PC-9 (cell line): ENCODE measurements at regions of chr6 and their contacts with region 1.

Region 1: DNA sequence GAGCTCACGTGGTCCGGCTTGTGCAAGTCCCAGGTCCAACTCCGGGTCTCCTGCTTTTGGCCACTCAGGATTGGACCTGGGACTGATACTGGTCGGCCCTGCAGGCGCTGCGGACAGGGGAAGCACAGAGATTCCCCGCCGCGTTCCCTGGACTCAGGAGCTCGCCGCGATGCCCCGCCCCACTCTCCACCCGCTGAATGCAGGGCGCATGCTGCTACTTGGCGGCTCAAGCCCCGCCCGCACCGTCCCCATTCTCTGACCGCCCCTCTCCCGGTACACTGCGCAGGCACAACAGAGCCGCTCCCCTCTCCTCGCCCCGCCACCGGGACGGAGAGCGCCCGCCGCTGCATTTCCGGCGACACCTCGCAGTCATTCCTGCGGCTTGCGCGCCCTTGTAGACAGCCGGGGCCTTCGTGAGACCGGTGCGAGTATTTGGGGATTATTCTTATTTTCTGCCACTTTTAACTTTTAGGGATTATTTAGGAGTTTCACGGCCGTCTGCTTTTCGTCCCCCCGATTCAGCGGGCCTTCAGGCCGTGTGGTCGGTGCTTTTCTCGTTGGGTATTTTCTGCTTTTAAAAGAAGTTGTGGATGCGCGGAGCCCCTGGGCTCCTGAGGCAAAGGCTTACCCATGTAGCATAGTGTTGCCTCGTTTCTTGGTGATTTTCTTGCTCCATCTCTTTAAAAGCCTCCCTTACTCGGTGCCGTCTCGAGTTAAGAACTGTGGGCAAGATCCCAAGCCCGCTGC is at the start of gene TMEM14C:
- DNase-seq: peak; percentile 85 to 99
- H3K4me3 ChIP-seq: peak within 1 kb of the TSS; percentile 96
- H3K27ac ChIP-seq: peak within 1 kb of the TSS; percentile 85
- H3K4me1 ChIP-seq: 0 out of 2 replicates have a peak, but pooled peaks cover 10% of the 10 kb centered on the region
- H3K27me3 ChIP-seq: no peaks in the 10 kb centered on the region
- CTCF ChIP-seq: no peak
- total RNA-seq, gene TMEM14C: 154 and 166 TPM in 2 replicates

Region 2: DNA sequence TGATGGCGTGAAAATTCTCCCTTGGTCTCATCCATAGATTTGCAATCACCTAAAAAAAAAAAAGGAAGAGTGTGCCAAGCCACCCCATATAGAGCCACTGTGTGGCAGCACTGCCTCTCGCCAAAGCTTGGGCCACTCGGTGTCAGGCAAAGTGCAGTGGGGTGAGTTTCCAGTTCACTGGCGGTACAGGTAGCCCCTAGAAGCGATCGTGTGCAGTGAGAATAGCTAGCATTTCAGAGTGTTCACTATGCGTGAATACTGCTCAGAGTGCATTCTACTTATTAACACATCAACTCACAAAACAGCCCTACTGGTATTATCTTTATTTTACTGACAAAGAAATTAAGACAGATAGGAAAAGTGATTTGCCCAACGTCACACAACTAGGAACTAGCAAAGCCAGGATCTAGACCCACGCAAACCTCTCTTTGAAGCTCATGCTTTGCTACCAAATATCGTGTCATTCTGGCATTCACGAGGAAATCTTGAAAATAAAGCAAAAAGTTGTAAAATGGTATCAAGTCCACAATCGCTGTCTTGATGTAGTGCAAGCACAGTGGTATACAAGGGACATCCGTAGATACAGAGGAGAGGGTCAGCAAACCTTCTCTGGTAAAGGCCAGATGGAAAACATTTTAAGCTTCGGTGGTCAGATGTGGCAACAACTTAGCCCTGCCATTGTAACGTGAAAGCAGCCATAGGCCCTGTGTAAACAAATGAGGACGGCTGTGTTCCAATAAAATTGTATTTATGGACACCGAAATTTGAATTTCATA is 212.2 kb before region 1 on chr6:
- CTCF ChIA-PET with region 1: no interaction called
- POLR2A ChIA-PET with region 1: interaction called, 4 read pairs
- intact Hi-C with region 1: loop called (anchors 10 kb)
- DNase-seq: peak in 1 of 2 experiments; percentile 72
- H3K4me3 ChIP-seq: no peak overlapping the region; the same call in 1 of the 2 replicates
- H3K27ac ChIP-seq: no peak overlapping the region
- H3K4me1 ChIP-seq: peaks cover 10% of the 10 kb centered on the region; the same call in 1 of the 2 replicates
- H3K27me3 ChIP-seq: no peaks in the 10 kb centered on the region
- CTCF ChIP-seq: peak; percentile 72